T-cell (primary cell): ENCODE measurements at regions of chr11 and their contacts with region 1.

Region 1: DNA sequence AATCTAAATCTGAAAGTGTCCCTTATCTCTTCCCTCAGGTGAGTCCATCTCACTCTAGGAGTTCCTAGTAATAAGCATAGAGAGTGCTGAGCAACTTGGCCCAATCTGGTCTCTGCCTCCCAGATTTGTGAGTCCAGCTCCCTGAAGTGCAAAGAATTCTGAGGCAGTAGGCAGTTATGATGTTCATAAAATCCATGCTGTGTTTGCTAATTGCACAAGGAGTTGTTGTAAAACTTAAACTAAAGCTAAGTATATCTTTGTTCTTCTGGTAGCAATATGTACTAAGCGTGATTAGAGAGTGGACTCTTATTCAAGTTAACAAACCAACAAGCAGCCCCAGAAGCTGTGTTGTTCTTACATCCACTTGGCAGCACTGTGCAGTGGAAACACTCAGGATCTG is 7.6 kb upstream of the PTH start:
- DNase-seq: no peak
- ATAC-seq: no peak
- H3K4me3 ChIP-seq: no peak overlapping the region
- H3K4me3 Mint-ChIP-seq: no peak overlapping the region
- H3K27ac ChIP-seq: no peak overlapping the region
- H3K27ac Mint-ChIP-seq: no peak overlapping the region
- H3K4me1 ChIP-seq: no peaks in the 10 kb centered on the region
- H3K4me1 Mint-ChIP-seq: no peaks in the 10 kb centered on the region
- H3K27me3 ChIP-seq: peaks cover 0 to 3% of the 10 kb centered on the region in 2 experiments
- H3K27me3 Mint-ChIP-seq: peaks cover 24% of the 10 kb centered on the region in 2 donors

Region 2: GRCh38 chr11:13405220-13405619 is 98.2 kb before region 1 on chr11:
- CTCF ChIA-PET with region 1: no interaction called
- POLR2A ChIA-PET with region 1: no interaction called
- DNase-seq: no peak
- ATAC-seq: no peak
- H3K4me3 ChIP-seq: no peak overlapping the region
- H3K4me3 Mint-ChIP-seq: no peak overlapping the region
- H3K27ac ChIP-seq: no peak overlapping the region
- H3K27ac Mint-ChIP-seq: no peak overlapping the region
- H3K4me1 ChIP-seq: no peaks in the 10 kb centered on the region
- H3K4me1 Mint-ChIP-seq: no peaks in the 10 kb centered on the region
- H3K27me3 ChIP-seq: no peaks in the 10 kb centered on the region
- H3K27me3 Mint-ChIP-seq: no peaks in the 10 kb centered on the region

Region 3: GRCh38 chr11:14212986-14213385 is 709.6 kb after region 1 on chr11:
- CTCF ChIA-PET with region 1: interaction called in 1 of 2 experiments, 13 read pairs
- POLR2A ChIA-PET with region 1: no interaction called
- DNase-seq: no peak
- ATAC-seq: no peak
- H3K4me3 ChIP-seq: no peak overlapping the region
- H3K4me3 Mint-ChIP-seq: no peak overlapping the region
- H3K27ac ChIP-seq: no peak overlapping the region
- H3K27ac Mint-ChIP-seq: no peak overlapping the region
- H3K4me1 ChIP-seq: no peaks in the 10 kb centered on the region
- H3K4me1 Mint-ChIP-seq: no peaks in the 10 kb centered on the region
- H3K27me3 ChIP-seq: no peaks in the 10 kb centered on the region
- H3K27me3 Mint-ChIP-seq: peaks cover 0 to 4% of the 10 kb centered on the region in 2 donors